ENCODE measurements at regions of chr11 and their contacts with region 1.

Region 1: GRCh38 chr11:76799066-76799804 is 16.1 kb downstream of the TSKU start:
- DNase-seq: peak; percentile 97
- H3K4me3 ChIP-seq: peak overlapping the region in 1 of 2 experiments; percentile 46; a peak in 1 of 4 replicates
- H3K27ac ChIP-seq: no peak overlapping the region; a peak in 1 of 4 replicates
- H3K4me1 ChIP-seq: peaks cover 0 to 9% of the 10 kb centered on the region in 2 experiments; a peak in 1 of 4 replicates
- H3K27me3 ChIP-seq: no peaks in the 10 kb centered on the region
- CTCF ChIP-seq: peak; percentile 80
- EP300 ChIP-seq: no peak
- RAD21 ChIP-seq: peak; percentile 83

Region 2: DNA sequence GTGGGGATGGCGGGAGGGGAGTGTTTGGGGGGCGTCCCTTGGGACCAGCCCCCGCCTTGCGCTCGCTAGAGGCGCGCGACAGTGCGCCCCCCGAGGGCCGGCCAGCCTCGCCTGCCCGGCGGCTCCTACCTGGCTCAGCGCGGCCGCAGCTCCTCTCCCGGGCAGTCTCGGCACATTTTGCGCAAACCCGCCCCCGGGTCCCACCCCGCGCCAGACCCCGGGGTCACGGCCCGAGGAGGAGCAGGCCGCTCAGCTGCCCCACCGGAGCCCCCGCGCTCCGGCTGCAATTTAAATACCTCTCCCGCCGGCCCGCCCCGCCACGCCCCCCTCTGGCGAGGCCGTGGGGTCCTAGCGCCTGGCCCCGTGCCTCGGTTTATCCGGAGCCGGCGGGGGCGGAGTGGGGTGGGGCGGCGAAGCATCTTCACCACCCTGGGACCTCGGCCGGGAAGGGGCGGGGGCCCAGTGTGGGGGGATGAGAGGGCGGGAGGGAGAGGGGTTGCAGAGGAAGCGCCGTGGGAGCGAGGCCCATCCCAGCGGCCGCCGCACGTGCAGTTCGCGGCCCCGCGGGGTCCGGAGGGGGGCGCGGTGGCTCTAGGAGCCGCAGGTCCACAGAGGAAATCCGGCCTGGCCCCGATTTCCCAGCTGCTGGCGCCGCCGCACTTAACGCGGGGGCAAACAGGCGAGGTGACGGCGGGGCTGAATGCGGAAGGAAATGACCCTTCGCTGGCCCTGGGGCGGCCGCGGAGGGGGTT is 128.6 kb before region 1 on chr11 and contains the start of gene LRRC32:
- CTCF ChIA-PET with region 1: no interaction called
- POLR2A ChIA-PET with region 1: no interaction called
- DNase-seq: peak; percentile 87
- H3K4me3 ChIP-seq: peak within 1 kb of the TSS; percentile 50 to 60
- H3K27ac ChIP-seq: no peak within 1 kb of the TSS
- H3K4me1 ChIP-seq: peaks cover 0 to 8% of the 10 kb centered on the region in 2 experiments; a peak in 1 of 4 replicates
- H3K27me3 ChIP-seq: no peaks in the 10 kb centered on the region
- CTCF ChIP-seq: 0 out of 2 replicates have a peak, but pooled peaks have one; percentile 2
- EP300 ChIP-seq: no peak
- RAD21 ChIP-seq: no peak
- polyA plus RNA-seq, gene LRRC32: 0.19 and 0.43 TPM in 2 replicates

Region 3: DNA sequence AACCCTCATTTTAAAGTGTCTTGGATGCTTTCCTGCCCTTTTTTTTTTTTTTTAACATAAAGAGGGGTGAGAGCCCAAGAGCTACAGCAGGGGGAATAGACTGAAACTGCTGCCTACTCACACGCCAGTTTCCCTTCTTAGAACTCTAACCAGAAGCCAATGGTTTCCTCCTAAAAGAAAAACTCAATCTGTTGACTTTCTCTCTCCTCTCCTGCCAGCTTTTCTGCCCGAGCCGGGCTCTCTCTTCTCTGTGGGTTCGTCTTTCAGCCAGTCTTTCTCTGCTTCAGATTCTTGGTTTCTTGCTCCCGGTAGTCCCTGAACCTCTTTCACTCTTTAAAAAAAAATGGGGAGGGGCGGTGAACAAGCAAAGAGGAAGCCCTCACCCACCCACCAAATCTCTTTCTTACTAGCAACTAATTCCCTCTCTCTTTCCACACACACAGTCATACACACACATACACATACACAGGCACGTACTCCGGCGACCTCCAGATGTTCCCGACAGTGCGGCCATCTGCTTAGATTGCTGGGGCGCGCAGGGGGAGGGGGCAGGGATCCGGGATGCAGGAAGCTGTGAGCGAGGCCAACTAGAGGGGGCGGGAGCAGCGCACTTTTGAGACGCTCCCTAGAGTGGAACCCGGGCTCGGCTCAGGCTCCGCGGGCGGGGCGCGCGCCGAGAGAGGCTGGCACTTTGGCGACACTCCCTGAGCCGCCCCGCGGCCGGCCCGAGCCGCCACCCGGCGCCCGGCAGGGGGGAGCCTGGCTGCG is 16.5 kb before region 1 on chr11:
- CTCF ChIA-PET with region 1: interaction called, 38 read pairs
- POLR2A ChIA-PET with region 1: interaction called, 4 read pairs
- DNase-seq: peak; percentile 94
- H3K4me3 ChIP-seq: peak overlapping the region; percentile 90 to 93
- H3K27ac ChIP-seq: peak overlapping the region; percentile 63 to 97; a peak in 3 of 4 replicates
- H3K4me1 ChIP-seq: peaks cover 18 to 56% of the 10 kb centered on the region in 2 experiments; a peak in 3 of 4 replicates
- H3K27me3 ChIP-seq: no peaks in the 10 kb centered on the region
- CTCF ChIP-seq: no peak
- EP300 ChIP-seq: peak in 1 of 2 experiments; percentile 66; a peak in 1 of 4 replicates
- RAD21 ChIP-seq: no peak

Region 4: DNA sequence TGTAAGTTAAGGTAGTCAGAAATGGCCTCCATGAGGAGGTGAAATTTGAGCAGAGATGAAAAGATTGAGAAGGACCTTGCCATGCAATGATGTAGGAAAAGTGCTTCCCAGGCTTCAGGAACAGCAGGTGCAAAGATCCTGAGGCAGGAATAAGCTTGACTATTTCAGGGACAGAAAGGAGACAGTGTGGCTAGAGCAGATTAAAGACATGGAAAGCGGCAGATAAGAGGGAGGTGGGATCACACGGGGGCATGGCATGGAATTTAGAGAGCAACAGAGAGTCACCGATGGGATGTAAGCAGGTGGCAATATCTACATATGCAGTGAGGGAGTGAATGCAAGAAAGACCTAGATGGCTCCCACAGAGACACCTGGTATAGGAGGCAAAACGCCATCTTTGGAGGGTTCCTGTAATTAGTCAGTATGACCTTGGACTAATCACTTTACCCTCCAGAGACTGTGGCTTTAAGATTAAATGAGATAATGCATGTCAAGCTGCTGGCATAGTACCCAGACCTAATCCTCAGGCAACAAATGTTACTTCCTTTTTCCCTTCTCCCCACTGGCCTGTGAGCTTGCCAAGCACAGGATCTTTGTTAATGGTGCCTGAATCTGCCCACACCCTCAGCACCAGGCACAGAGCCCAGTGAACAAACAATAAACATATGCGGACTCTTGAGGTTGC is 36.8 kb after region 1 on chr11:
- CTCF ChIA-PET with region 1: no interaction called
- POLR2A ChIA-PET with region 1: no interaction called
- DNase-seq: no peak
- H3K4me3 ChIP-seq: no peak overlapping the region
- H3K27ac ChIP-seq: no peak overlapping the region
- H3K4me1 ChIP-seq: peaks cover under 1 to 15% of the 10 kb centered on the region in 2 experiments; a peak in 2 of 4 replicates
- H3K27me3 ChIP-seq: peaks cover 38% of the 10 kb centered on the region; the same call in 1 of the 2 replicates
- CTCF ChIP-seq: no peak
- EP300 ChIP-seq: no peak
- RAD21 ChIP-seq: no peak

Measured in SK-N-SH (cell line).